ENCODE measurements at regions of chr6 and their contacts with region 1.

Region 1: DNA sequence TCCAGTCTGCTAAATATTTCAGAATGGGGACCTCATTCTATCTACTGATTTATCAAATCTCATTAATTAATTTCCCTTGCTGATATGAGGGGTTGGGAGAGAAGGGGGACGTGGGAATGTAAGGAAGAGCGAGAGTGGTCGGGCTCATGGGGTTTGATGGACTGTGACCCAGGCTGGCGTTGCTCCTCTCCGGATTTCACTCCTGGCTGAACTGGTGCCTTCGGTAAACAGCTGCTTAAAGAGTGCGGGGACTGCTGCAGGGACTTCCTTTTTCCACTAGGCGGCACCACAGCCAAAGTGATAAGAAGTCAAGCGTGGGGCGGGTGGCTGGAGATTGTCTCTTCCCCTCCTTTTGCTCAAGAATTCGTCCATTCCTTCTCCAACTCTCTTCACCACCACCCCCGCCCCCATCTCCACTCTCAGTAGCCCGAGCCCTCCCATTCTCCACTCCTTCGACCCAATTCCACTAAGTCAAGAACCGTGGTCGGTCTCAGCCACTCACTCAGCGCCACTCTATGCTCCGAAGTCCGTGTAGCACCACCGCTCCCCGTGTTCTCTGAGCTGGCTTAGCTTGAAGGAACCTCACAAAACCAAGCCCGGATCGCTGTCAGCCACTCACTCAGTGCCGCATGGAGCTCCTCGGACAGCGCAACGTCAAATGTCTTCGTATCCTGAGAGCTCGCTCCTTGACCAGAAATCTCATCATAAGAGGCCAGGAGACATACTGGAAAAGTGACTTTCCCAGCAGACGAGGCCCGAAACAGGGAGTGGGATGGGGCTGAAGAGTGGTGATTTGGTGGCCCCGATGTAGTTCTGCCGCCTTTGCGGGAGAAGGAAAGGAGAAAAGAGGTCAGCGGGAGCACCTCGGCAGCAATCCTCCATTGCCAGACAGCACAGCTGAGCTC is 9.7 kb downstream of the TRIM31 start:
- DNase-seq: peak; percentile 87
- H3K4me3 Mint-ChIP-seq: peak overlapping the region; percentile 75
- H3K27ac Mint-ChIP-seq: peak overlapping the region; percentile 16
- H3K4me1 Mint-ChIP-seq: peaks cover 42% of the 10 kb centered on the region
- H3K27me3 Mint-ChIP-seq: peaks cover 61% of the 10 kb centered on the region

Region 2: DNA sequence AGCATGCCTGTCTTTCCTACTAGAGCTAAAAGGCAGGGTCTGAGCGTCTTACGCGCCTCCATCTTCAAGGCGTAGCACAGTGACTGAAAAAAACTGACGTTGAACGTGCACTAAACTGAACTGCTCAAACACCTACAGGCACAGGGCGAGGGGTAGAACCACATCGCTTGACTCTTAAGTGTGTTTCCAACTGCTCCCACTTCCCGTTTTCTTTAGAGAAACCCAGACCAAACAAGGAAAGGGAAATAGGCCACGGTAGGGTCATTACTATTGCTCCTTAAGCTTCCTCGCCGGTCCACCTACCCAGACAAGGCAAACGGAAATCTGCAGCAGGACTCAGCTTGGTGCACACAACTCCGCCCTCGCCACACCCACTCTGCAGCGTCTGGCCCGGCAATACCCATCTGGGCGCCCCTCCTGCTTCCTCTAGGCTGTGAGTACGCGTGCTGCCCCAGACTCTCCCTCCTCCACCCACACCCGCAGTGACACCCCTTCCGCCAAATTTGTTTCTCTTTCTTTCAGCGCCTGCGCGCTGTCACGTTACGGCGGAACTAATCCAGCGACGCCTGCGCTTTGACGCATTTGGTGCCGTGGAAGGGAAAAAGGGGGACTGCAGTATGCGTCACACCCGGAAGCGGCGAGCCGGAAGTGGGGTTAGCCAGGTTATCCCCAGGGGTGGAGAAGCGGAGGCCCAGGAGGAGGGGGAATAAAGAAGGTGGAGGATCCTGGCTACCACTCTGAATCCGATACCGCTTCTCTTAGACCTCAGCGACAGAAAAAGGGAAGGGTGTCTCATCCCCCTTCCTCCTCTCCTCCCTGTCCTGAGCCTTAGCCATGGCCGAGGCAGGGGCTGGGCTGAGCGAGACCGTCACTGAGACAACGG is 36.4 kb before region 1 on chr6 and contains the start of gene PPP1R11:
- CTCF ChIA-PET with region 1: interaction called, 10 read pairs
- POLR2A ChIA-PET with region 1: interaction called, 27 read pairs
- DNase-seq: peak; percentile 99
- H3K4me3 Mint-ChIP-seq: peak within 1 kb of the TSS; percentile 93
- H3K27ac Mint-ChIP-seq: peak within 1 kb of the TSS; percentile 94
- H3K4me1 Mint-ChIP-seq: peaks cover 63% of the 10 kb centered on the region
- H3K27me3 Mint-ChIP-seq: peaks cover 8% of the 10 kb centered on the region
- total RNA-seq, gene PPP1R11: 62.5 to 62.6 TPM

Region 3: GRCh38 chr6:30087876-30088275 is 15.3 kb before region 1 on chr6:
- CTCF ChIA-PET with region 1: interaction called, 15 read pairs
- POLR2A ChIA-PET with region 1: no interaction called
- DNase-seq: no peak
- H3K4me3 Mint-ChIP-seq: no peak overlapping the region
- H3K27ac Mint-ChIP-seq: no peak overlapping the region
- H3K4me1 Mint-ChIP-seq: no peaks in the 10 kb centered on the region
- H3K27me3 Mint-ChIP-seq: peaks cover 57% of the 10 kb centered on the region

Region 4: GRCh38 chr6:30122515-30122914 is 19.3 kb after region 1 on chr6:
- CTCF ChIA-PET with region 1: interaction called, 23 read pairs
- POLR2A ChIA-PET with region 1: no interaction called
- DNase-seq: no peak
- H3K4me3 Mint-ChIP-seq: no peak overlapping the region
- H3K27ac Mint-ChIP-seq: no peak overlapping the region
- H3K4me1 Mint-ChIP-seq: no peaks in the 10 kb centered on the region
- H3K27me3 Mint-ChIP-seq: peaks cover 31% of the 10 kb centered on the region

Region 5: DNA sequence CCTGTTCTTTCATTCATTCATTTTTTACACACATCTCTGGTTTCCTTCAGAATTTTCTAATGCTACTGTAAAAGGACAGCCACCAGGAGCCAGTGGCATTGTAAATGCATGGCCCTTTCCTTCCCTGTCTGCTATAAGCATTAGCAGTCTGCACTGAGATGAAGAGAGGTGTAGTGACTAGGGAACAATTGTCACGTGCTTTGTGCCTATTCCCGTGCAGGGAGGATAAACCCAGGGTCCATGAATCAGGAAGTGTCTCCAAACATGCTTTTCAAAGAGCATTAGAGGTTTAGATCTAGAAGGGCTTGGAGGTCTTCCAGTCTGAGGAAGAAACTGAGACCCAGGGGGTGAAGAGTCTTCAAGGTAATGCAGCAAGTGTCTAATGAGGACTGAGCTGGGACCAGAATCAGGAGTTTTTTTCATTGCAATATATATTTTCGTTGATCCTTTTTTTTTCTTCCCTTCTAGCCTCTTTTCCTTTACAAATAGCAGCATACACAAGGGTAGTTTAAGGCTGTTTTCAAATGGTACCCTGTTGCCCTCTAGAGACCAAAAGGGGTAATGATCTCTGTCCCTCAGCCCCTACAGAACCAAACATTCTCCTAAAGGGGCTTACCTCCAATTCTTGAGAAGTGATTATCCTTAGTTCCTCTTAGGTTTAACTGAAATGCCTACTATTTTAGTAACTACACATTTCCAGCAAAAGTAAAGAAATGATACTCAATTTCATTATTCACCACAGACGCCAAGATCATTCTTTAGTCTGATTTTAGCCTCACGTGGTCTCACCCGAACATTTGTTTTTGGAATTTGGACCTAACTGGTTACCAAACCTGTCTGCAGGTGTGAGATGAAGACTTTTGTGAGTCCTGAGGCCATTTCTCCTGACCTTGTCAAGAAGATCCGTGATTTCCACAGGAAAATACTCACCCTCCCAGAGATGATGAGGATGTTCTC is 66.7 kb after region 1 on chr6:
- CTCF ChIA-PET with region 1: interaction called, 21 read pairs
- POLR2A ChIA-PET with region 1: interaction called, 4 read pairs
- DNase-seq: no peak
- H3K4me3 Mint-ChIP-seq: no peak overlapping the region
- H3K27ac Mint-ChIP-seq: no peak overlapping the region
- H3K4me1 Mint-ChIP-seq: peaks cover 23% of the 10 kb centered on the region
- H3K27me3 Mint-ChIP-seq: peaks cover 41% of the 10 kb centered on the region

Region 6: GRCh38 chr6:30364591-30364990 is 261.4 kb after region 1 on chr6:
- CTCF ChIA-PET with region 1: no interaction called
- POLR2A ChIA-PET with region 1: no interaction called
- DNase-seq: no peak
- H3K4me3 Mint-ChIP-seq: no peak overlapping the region
- H3K27ac Mint-ChIP-seq: no peak overlapping the region
- H3K4me1 Mint-ChIP-seq: no peaks in the 10 kb centered on the region
- H3K27me3 Mint-ChIP-seq: peaks cover 82% of the 10 kb centered on the region